ENCODE measurements at regions of chr9 and their contacts with region 1.

Region 1: GRCh38 chr9:706606-707459 is 134.7 kb upstream of the DMRT1 start:
- DNase-seq: peak; percentile 83
- H3K4me3 ChIP-seq: peak overlapping the region; percentile 48 to 57 (median 50)
- H3K27ac ChIP-seq: peak overlapping the region; percentile 90
- H3K4me1 ChIP-seq: peaks cover 20% of the 10 kb centered on the region
- H3K27me3 ChIP-seq: no peaks in the 10 kb centered on the region
- CTCF ChIP-seq: no peak

Region 2: DNA sequence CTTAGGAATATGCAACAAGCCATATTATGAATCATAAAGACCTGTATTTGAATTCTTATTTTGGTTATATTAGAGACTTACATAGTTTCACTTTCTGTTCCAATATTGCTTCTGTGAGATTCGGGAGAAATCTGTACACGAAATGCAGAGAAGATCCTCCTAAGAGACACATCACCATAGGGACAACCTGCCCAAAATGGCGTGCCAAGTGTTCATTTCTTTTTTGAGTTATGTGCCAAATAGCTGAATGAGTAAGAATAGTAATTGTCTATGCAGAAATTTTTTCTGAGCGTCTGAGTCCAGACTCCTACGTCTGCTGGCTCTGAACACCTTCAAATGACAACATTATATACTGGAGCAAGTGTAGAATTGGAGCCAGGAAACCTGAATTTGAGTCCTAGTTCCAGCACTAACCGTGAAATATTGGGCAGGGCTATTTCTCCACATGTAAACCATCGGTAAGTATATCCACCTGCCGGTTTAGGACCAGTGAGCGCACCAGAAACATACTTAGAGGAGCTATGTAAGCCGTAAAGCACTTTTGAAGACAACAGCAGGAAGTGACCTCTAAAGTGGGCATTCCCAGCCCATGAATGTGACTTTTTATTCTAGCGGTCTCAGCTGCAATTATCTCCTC is 29.3 kb before region 1 on chr9:
- CTCF ChIA-PET with region 1: no interaction called
- dilution Hi-C with region 1: no loop called
- in situ Hi-C with region 1: no loop called
- intact Hi-C with region 1: loop called (anchors 2 kb)
- DNase-seq: no peak
- H3K4me3 ChIP-seq: peak overlapping the region; percentile 2 to 48 (median 43)
- H3K27ac ChIP-seq: peak overlapping the region; percentile 96
- H3K4me1 ChIP-seq: peaks cover 62% of the 10 kb centered on the region
- H3K27me3 ChIP-seq: no peaks in the 10 kb centered on the region
- CTCF ChIP-seq: no peak

Region 3: GRCh38 chr9:684054-684890 is 22.6 kb before region 1 on chr9:
- CTCF ChIA-PET with region 1: no interaction called
- dilution Hi-C with region 1: no loop called
- in situ Hi-C with region 1: no loop called
- intact Hi-C with region 1: loop called (anchors 2 kb)
- DNase-seq: peak; percentile 88
- H3K4me3 ChIP-seq: peak overlapping the region; percentile 52 to 60 (median 59)
- H3K27ac ChIP-seq: peak overlapping the region; percentile 99
- H3K4me1 ChIP-seq: peaks cover 59% of the 10 kb centered on the region
- H3K27me3 ChIP-seq: no peaks in the 10 kb centered on the region
- CTCF ChIP-seq: no peak

Region 4: DNA sequence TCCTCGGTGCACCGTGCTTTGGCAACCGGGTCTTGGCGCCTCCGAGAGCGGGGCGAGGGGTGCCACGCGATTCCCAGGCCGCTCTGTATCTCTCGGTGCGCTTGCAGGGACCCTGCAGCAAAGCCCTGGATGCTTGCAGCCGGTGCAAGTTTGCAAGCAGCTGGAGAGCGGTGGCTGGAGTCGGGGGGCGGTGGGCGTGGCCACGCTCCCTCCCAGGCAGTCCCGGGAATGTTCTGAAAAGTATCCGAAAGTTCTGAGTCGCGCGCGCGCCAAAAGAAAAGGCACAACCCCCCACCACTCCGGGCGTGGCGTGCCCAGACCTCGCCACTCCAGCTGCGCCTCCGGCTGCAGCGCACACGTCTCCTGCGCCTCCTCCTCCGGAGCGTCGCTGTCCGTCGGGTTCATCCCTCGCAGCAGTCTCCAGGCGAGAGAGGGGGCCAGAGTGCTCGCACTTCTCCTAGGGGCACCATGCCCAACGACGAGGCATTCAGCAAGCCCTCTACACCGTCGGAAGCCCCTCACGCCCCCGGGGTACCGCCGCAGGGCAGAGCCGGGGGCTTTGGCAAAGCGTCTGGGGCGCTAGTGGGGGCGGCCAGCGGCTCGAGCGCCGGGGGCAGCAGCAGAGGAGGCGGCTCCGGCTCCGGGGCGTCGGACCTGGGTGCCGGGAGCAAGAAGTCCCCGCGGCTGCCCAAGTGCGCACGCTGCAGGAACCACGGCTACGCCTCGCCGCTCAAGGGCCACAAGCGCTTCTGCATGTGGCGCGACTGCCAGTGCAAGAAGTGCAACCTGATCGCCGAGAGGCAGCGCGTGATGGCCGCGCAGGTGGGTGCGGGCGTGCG is 134.8 kb after region 1 on chr9 and contains the start of gene DMRT1:
- CTCF ChIA-PET with region 1: no interaction called
- dilution Hi-C with region 1: no loop called
- in situ Hi-C with region 1: no loop called
- intact Hi-C with region 1: no loop called
- DNase-seq: no peak
- H3K4me3 ChIP-seq: no peak within 1 kb of the TSS
- H3K27ac ChIP-seq: no peak within 1 kb of the TSS
- H3K4me1 ChIP-seq: no peaks in the 10 kb centered on the region
- H3K27me3 ChIP-seq: peaks cover 20% of the 10 kb centered on the region
- CTCF ChIP-seq: no peak
- total RNA-seq, gene DMRT1: not detected

Measured in mammary epithelial cell (primary cell).